Endothelial cell of umbilical vein (primary cell): ENCODE measurements at regions of chr3 and their contacts with region 1.

Region 1: GRCh38 chr3:196440041-196440537 is 7.9 kb upstream of the UBXN7 start:
- DNase-seq: no peak
- H3K4me3 ChIP-seq: no peak overlapping the region
- H3K27ac ChIP-seq: no peak overlapping the region
- H3K4me1 ChIP-seq: no peaks in the 10 kb centered on the region
- H3K27me3 ChIP-seq: no peaks in the 10 kb centered on the region
- CTCF ChIP-seq: no peak
- POLR2A ChIP-seq: no peak

Region 2: DNA sequence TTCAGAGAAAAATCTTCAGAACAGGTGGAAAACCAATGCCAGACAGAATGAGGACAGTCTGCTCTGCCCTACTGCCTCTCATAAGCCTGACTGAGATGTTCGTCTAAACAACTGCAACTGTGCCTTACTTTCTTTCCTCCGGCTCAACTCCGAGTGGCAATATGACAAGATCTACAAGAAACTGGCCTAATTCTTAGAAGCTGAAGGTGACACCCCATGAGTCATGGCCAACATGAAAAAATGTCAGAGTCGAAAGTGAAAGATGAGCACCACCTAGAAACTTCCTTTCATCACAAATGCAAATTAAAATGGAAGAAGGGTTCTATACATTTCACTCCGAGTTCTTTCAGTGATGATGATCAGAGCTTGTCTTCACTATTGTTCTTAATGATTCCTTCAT is 165.5 kb before region 1 on chr3:
- CTCF ChIA-PET with region 1: no interaction called
- POLR2A ChIA-PET with region 1: no interaction called
- dilution Hi-C with region 1: loop called (anchors 10 kb)
- intact Hi-C with region 1: no loop called
- DNase-seq: no peak
- H3K4me3 ChIP-seq: no peak overlapping the region
- H3K27ac ChIP-seq: no peak overlapping the region
- H3K4me1 ChIP-seq: peaks cover 2% of the 10 kb centered on the region
- H3K27me3 ChIP-seq: no peaks in the 10 kb centered on the region
- CTCF ChIP-seq: no peak
- POLR2A ChIP-seq: no peak